CD8-positive, alpha-beta T cell (primary cell): ENCODE measurements at regions of chr10 and their contacts with region 1.

Region 1: DNA sequence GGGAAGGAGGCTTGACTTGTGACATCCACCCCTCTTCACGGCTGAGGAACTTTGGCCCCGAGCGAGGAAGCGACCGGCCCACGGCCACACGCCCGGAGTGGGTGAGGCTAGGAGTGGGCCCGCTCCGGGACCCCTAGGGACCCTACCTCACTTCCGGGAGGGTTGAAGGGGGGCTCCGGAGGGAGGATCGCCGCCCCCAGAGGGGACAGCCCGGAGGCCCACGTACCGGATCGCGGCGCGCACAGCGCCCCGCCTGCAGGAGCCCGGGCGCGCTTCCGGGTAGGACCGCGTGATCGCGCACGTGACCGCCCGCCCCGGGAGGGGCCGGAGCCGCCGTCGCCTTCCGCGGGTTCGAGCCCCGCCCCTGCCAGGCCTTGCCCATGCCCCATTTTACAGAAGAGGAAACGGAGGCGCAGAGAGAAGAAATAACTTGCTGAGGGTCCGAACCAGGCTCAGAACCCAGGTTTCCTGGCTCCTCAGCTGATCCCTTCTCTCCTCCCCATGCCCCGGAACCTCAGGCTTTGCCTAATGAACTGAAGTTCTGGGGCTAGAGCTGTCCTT is at the start of gene HPS1:
- DNase-seq: peak; percentile 60 to 89 (median 79)
- ATAC-seq: peak; percentile 85
- H3K4me3 ChIP-seq: peak within 1 kb of the TSS; percentile 74 to 91
- H3K4me3 Mint-ChIP-seq: peak within 1 kb of the TSS; percentile 90
- H3K27ac ChIP-seq: peak within 1 kb of the TSS; percentile 81 to 90
- H3K27ac Mint-ChIP-seq: peak within 1 kb of the TSS; percentile 92
- H3K4me1 ChIP-seq: peaks cover 16% of the 10 kb centered on the region
- H3K4me1 Mint-ChIP-seq: peaks cover 45% of the 10 kb centered on the region
- H3K27me3 ChIP-seq: no peaks in the 10 kb centered on the region
- H3K27me3 Mint-ChIP-seq: peaks cover under 1% of the 10 kb centered on the region
- CTCF ChIP-seq: no peak
- total RNA-seq, gene HPS1: 54.1 to 54.3 TPM

Region 2: GRCh38 chr10:98273057-98273850 is 173.5 kb before region 1 on chr10:
- CTCF ChIA-PET with region 1: no interaction called
- POLR2A ChIA-PET with region 1: no interaction called
- intact Hi-C with region 1: no loop called
- DNase-seq: no peak
- ATAC-seq: no peak
- H3K4me3 ChIP-seq: no peak overlapping the region
- H3K4me3 Mint-ChIP-seq: no peak overlapping the region
- H3K27ac ChIP-seq: no peak overlapping the region
- H3K27ac Mint-ChIP-seq: no peak overlapping the region
- H3K4me1 ChIP-seq: no peaks in the 10 kb centered on the region
- H3K4me1 Mint-ChIP-seq: peaks cover 7% of the 10 kb centered on the region
- H3K27me3 ChIP-seq: peaks cover 0 to 2% of the 10 kb centered on the region in 2 experiments
- H3K27me3 Mint-ChIP-seq: peaks cover 33% of the 10 kb centered on the region
- CTCF ChIP-seq: no peak

Region 3: DNA sequence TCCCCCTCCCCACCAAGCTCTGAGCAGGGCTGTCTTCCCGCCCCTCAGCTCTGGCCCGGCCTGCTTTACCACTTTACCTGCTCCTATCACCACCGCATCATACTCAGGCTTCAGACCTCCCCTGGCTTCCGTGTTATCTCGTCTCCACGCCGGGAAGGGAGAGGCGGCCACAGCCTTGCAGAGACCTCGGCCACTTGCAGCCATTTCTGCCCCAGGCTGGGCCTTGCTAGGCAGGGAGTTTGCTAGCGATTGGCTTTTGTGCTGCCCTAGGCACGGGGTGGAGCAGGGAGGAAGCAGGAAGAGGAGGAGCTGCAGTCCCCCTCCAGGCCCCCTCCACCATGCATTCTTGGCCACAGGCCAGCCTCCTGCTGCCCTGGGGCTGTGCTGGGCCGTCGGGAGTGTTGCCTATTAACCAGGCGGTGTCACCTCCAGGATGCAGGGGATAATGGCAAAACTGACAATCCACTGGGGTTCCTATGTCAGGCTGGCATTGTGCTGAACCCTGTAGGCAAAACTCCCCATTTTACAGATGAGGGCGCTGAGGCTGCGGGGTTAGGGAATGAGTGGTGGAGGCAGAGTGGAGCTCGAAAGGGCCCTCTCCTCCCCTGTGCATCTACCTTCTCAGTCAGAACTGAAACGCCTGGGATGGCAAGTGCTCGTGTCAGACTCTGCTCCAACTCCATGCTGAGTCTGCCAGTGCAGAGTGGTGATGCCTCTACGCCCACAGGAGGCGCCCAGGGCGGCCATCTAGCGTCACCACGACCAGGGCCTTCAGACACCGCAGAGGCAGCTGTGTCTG is 31.6 kb before region 1 on chr10 and contains the start of gene PYROXD2:
- CTCF ChIA-PET with region 1: no interaction called
- POLR2A ChIA-PET with region 1: interaction called, 5 read pairs
- intact Hi-C with region 1: loop called in 1 of 2 experiments (anchors 1 kb)
- DNase-seq: peak; percentile 10 to 84 (median 59)
- ATAC-seq: peak; percentile 91
- H3K4me3 ChIP-seq: peak within 1 kb of the TSS; percentile 58 to 77
- H3K4me3 Mint-ChIP-seq: peak within 1 kb of the TSS; percentile 96
- H3K27ac ChIP-seq: peak within 1 kb of the TSS; percentile 46 to 77
- H3K27ac Mint-ChIP-seq: peak within 1 kb of the TSS; percentile 95
- H3K4me1 ChIP-seq: peaks cover 15% of the 10 kb centered on the region
- H3K4me1 Mint-ChIP-seq: peaks cover 25% of the 10 kb centered on the region
- H3K27me3 ChIP-seq: no peaks in the 10 kb centered on the region
- H3K27me3 Mint-ChIP-seq: no peaks in the 10 kb centered on the region
- CTCF ChIP-seq: no peak
- total RNA-seq, gene PYROXD2: 7.4 to 10.9 TPM

Region 4: GRCh38 chr10:99430451-99431189 is 983.9 kb after region 1 on chr10 and contains the start of gene GOT1:
- CTCF ChIA-PET with region 1: no interaction called
- POLR2A ChIA-PET with region 1: no interaction called
- intact Hi-C with region 1: loop called in 1 of 2 experiments (anchors 5 kb)
- DNase-seq: peak; percentile 83 to 98 (median 89)
- ATAC-seq: peak; percentile 92
- H3K4me3 ChIP-seq: peak within 1 kb of the TSS; percentile 81 to 96
- H3K4me3 Mint-ChIP-seq: peak within 1 kb of the TSS; percentile 98
- H3K27ac ChIP-seq: peak within 1 kb of the TSS; percentile 66 to 81
- H3K27ac Mint-ChIP-seq: peak within 1 kb of the TSS; percentile 96
- H3K4me1 ChIP-seq: peaks cover 21% of the 10 kb centered on the region
- H3K4me1 Mint-ChIP-seq: peaks cover 40% of the 10 kb centered on the region
- H3K27me3 ChIP-seq: no peaks in the 10 kb centered on the region
- H3K27me3 Mint-ChIP-seq: no peaks in the 10 kb centered on the region
- CTCF ChIP-seq: no peak
- total RNA-seq, gene GOT1: 7.2 to 8.6 TPM